ENCODE measurements at regions of chr1 and their contacts with region 1.

Region 1: DNA sequence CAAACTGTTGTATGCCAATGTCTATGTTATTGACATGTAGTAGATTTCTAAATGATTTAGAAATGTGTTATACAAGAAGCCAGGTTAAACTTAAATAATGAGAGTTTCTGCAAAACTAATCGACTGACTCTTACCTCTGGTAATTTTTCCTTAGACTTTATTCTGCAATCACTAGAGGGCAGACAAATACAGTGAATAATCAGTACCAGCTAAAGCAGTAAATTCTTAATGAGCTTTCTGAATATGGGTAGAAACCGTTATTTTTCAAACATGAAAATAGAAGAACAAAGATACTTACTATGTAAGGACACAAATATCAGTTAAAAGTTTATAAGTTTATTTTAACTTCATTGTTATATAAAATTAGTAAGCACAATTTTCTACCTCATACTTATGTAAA is 97.9 kb upstream of the RGS1 start:
- DNase-seq: no peak
- H3K4me3 ChIP-seq: no peak overlapping the region
- H3K27ac ChIP-seq: peak overlapping the region in 3 of 4 donors; percentile 57 to 67 (median 62)
- H3K4me1 ChIP-seq: peaks cover 0 to 38% (median 21%) of the 10 kb centered on the region in 4 donors
- H3K27me3 ChIP-seq: no peaks in the 10 kb centered on the region
- CTCF ChIP-seq: peak; percentile 37 to 53 (median 52)
- EP300 ChIP-seq: no peak
- POLR2A ChIP-seq: no peak

Region 2: GRCh38 chr1:192235127-192235526 is 242.5 kb before region 1 on chr1:
- intact Hi-C with region 1: no loop called
- DNase-seq: no peak
- H3K4me3 ChIP-seq: no peak overlapping the region
- H3K27ac ChIP-seq: no peak overlapping the region
- H3K4me1 ChIP-seq: no peaks in the 10 kb centered on the region
- H3K27me3 ChIP-seq: no peaks in the 10 kb centered on the region
- CTCF ChIP-seq: no peak
- EP300 ChIP-seq: no peak
- POLR2A ChIP-seq: no peak

Region 3: GRCh38 chr1:192580351-192580962 is 102.8 kb after region 1 on chr1:
- intact Hi-C with region 1: loop called (anchors 2 kb)
- DNase-seq: no peak
- H3K4me3 ChIP-seq: peak overlapping the region; percentile 37 to 62 (median 41)
- H3K27ac ChIP-seq: peak overlapping the region; percentile 75 to 83 (median 80)
- H3K4me1 ChIP-seq: peaks cover 0 to 51% (median 11%) of the 10 kb centered on the region in 4 donors
- H3K27me3 ChIP-seq: no peaks in the 10 kb centered on the region
- CTCF ChIP-seq: peak in 2 of 4 experiments; percentile 28 to 49
- EP300 ChIP-seq: no peak
- POLR2A ChIP-seq: no peak

Region 4: GRCh38 chr1:192609110-192610079 is 131.8 kb after region 1 on chr1:
- intact Hi-C with region 1: loop called (anchors 1 kb)
- DNase-seq: peak; percentile 84
- H3K4me3 ChIP-seq: no peak overlapping the region
- H3K27ac ChIP-seq: peak overlapping the region in 3 of 4 donors; percentile 9 to 50 (median 43)
- H3K4me1 ChIP-seq: peaks cover 0 to 23% (median 10%) of the 10 kb centered on the region in 4 donors
- H3K27me3 ChIP-seq: no peaks in the 10 kb centered on the region
- CTCF ChIP-seq: no peak
- EP300 ChIP-seq: no peak
- POLR2A ChIP-seq: no peak

Region 5: DNA sequence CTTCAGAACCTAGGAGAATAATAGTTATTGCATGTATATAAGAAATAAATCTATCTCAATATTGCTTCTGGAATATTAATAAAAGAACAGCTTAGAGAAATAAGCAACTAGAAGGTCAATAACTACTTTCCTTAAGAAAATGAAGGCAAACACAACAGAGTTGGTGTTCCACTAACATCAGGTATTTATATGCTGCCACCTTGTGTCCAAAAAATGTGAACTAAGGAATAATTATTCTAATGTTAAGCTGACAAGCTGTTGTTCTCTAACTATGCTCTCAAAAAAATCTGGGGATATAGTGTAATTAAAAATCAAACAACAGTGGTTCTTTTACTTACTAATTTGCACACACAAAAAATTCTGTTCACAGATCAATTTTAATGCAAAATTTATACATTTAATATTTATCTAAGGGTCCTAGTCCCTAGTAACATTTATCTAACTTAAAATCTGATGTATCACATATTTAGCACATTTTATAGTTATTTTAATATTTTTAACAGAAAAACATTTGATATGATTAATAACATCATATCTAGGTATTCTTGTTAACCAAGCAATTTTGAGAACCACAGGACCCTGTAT is 541.9 kb after region 1 on chr1:
- intact Hi-C with region 1: loop called (anchors 5 kb)
- DNase-seq: no peak
- H3K4me3 ChIP-seq: peak overlapping the region in 1 of 4 donors; percentile 10
- H3K27ac ChIP-seq: peak overlapping the region in 3 of 4 donors; percentile 26 to 63 (median 54)
- H3K4me1 ChIP-seq: peaks cover 0 to 39% (median 17%) of the 10 kb centered on the region in 4 donors
- H3K27me3 ChIP-seq: no peaks in the 10 kb centered on the region
- CTCF ChIP-seq: peak; percentile 20 to 58 (median 46)
- EP300 ChIP-seq: no peak
- POLR2A ChIP-seq: no peak

Region 6: DNA sequence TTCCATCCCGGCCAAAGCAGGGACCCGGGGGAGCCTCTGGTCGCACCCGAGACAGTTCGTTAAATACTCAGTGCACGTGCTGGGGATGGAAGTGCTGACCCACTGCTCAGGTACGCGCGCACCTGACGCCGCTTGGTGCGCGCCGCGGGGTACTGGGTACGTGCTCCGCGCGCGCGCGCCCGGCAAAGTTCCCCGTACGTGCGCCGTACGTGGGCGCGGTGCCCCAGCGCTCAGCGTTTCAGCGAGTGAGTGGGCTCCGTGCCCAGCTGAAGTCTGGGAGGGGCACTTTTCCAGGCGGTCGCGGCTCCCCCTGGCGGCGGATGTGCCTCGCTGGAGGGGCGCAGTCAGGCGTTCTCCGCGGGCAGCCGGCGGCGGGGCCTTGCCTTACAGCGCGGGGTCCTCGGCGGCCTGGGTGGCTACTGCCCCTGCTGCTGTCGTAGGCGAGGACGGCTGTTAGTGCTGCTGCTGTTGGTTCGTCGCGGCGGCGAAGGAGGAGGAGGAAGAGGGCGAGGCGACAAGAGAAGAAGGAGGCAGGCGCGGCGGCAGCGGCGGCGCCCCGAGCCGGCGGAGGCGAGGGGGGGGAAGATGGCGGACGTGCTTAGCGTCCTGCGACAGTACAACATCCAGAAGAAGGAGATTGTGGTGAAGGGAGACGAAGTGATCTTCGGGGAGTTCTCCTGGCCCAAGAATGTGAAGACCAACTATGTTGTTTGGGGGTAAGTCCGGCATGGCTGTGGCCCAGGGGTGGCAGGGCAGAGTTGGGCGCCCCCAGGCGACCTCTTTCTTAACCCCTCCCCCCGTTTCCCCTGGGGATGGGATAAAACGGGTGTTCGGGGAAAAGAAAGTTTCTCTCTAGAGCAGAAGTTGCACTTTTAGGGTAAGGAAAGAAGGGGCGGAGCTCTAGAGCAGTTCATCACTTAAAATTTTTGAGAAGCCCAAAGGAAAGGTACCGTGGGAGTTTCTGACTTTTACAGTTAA is 644.3 kb after region 1 on chr1 and contains the start of gene CDC73:
- intact Hi-C with region 1: loop called (anchors 5 kb)
- DNase-seq: peak; percentile 98
- H3K4me3 ChIP-seq: peak within 1 kb of the TSS; percentile 58 to 74 (median 68)
- H3K27ac ChIP-seq: peak within 1 kb of the TSS; percentile 87 to 98 (median 93)
- H3K4me1 ChIP-seq: peaks cover 0 to 42% (median 30%) of the 10 kb centered on the region in 4 donors
- H3K27me3 ChIP-seq: no peaks in the 10 kb centered on the region
- CTCF ChIP-seq: peak; percentile 82 to 99 (median 94)
- EP300 ChIP-seq: peak in 2 of 4 donors; percentile 47 to 49
- POLR2A ChIP-seq: peak; percentile 80
- total RNA-seq, gene CDC73: 45.7 to 72.4 (median 52.2) TPM

Region 7: GRCh38 chr1:193406901-193407300 is 929.3 kb after region 1 on chr1:
- intact Hi-C with region 1: loop called (anchors 10 kb)
- DNase-seq: no peak
- H3K4me3 ChIP-seq: no peak overlapping the region
- H3K27ac ChIP-seq: peak overlapping the region in 3 of 4 donors; percentile 17 to 50 (median 36)
- H3K4me1 ChIP-seq: peaks cover 0 to 27% (median 22%) of the 10 kb centered on the region in 4 donors
- H3K27me3 ChIP-seq: no peaks in the 10 kb centered on the region
- CTCF ChIP-seq: peak in 3 of 4 experiments; percentile 54 to 69 (median 56)
- EP300 ChIP-seq: no peak
- POLR2A ChIP-seq: no peak